Vagina (tissue), 2 donors: ENCODE measurements at regions of chr15 and their contacts with region 1.

Region 1: GRCh38 chr15:40763801-40764732 is at the start of gene GCHFR:
- DNase-seq: no peak
- H3K4me3 ChIP-seq: peak within 1 kb of the TSS; percentile 59 to 64
- H3K27ac ChIP-seq: peak within 1 kb of the TSS; percentile 88
- H3K4me1 ChIP-seq: peaks cover 56% of the 10 kb centered on the region
- H3K27me3 ChIP-seq: no peaks in the 10 kb centered on the region
- CTCF ChIP-seq: peak in 1 of 3 experiments; percentile 29
- POLR2A ChIP-seq: peak in 1 of 2 donors; percentile 59
- total RNA-seq, gene GCHFR: 69.7 TPM

Region 2: GRCh38 chr15:40807888-40808475 is 43.9 kb after region 1 on chr15:
- intact Hi-C with region 1: loop called (anchors 1 kb)
- DNase-seq: no peak
- H3K4me3 ChIP-seq: peak overlapping the region; percentile 69 to 86
- H3K27ac ChIP-seq: peak overlapping the region; percentile 96
- H3K4me1 ChIP-seq: peaks cover 35% of the 10 kb centered on the region
- H3K27me3 ChIP-seq: no peaks in the 10 kb centered on the region
- CTCF ChIP-seq: no peak
- POLR2A ChIP-seq: no peak

Region 3: DNA sequence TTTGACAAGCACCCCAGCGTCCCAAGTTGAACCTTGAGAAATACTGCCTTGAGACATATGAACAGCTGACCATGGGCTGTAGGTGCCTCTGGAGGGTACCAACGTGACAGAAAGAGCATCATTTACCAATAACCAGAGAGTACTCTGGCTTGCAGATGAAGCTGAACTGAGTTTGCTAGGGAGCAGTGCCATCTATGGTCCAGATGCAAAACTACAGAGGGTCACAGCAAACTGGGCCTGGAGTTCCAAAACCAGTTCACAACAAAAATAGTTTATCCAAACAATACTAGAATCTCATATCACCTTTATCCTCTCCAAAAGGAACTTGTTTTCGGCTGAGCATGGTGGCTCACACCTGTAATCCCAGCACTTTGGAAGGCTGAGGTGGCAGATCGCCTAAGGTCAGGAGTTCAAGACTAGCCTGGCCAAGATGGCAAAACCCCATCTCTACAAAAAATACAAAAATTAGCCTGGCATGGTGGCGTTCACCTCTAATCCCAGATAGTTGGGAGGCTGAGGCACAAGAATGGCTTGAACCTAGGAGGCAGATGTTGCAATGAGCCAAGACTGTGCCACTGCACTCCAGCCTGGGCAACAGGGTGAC is 258.5 kb after region 1 on chr15:
- intact Hi-C with region 1: no loop called
- DNase-seq: no peak
- H3K4me3 ChIP-seq: no peak overlapping the region
- H3K27ac ChIP-seq: no peak overlapping the region
- H3K4me1 ChIP-seq: peaks cover 7% of the 10 kb centered on the region
- H3K27me3 ChIP-seq: no peaks in the 10 kb centered on the region
- CTCF ChIP-seq: peak; percentile 16 to 47 (median 44)
- POLR2A ChIP-seq: no peak